ENCODE measurements at regions of chr16 and their contacts with region 1.

Region 1: DNA sequence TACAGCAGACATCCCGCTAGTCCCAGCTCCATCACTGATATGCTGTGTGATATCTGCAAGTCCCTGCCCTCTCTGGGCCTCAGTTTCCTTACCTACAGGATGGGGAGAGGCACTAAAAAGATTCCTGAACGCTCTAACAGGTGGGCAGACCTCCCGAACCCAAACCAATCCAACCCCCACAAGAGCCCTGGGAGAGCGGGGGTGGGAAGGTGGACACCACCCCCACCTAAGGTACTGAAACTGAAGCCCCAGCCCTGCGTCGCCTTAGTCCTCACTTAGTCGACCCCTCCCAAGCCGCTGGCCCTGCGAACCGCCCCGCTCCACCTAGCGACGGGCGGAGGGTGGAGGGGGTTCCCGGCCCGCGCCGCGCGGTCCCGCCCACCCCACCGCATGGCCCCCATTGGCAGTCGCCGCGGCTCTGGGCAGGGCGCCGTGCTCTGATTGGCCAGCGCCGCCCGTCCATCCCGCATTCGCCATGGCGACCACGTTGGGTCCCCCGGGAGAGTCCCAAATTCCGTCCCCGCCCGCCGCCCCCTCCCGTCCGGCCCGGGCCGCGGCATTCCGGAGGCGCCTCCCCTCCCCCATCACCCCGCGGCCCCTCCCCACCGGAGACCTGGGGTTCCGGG is 578 bp downstream of the CCDC102A start:
- DNase-seq: peak; percentile 79
- ATAC-seq: peak; percentile 96
- H3K4me3 ChIP-seq: peak overlapping the region; percentile 62 to 76
- H3K27ac ChIP-seq: peak overlapping the region; percentile 92; the same call in 1 of the 2 replicates
- H3K4me1 ChIP-seq: peaks cover 17 to 44% of the 10 kb centered on the region in 2 experiments
- H3K27me3 ChIP-seq: no peaks in the 10 kb centered on the region
- CTCF ChIP-seq: no peak
- POLR2A ChIP-seq: no peak
- RAD21 ChIP-seq: no peak

Region 2: DNA sequence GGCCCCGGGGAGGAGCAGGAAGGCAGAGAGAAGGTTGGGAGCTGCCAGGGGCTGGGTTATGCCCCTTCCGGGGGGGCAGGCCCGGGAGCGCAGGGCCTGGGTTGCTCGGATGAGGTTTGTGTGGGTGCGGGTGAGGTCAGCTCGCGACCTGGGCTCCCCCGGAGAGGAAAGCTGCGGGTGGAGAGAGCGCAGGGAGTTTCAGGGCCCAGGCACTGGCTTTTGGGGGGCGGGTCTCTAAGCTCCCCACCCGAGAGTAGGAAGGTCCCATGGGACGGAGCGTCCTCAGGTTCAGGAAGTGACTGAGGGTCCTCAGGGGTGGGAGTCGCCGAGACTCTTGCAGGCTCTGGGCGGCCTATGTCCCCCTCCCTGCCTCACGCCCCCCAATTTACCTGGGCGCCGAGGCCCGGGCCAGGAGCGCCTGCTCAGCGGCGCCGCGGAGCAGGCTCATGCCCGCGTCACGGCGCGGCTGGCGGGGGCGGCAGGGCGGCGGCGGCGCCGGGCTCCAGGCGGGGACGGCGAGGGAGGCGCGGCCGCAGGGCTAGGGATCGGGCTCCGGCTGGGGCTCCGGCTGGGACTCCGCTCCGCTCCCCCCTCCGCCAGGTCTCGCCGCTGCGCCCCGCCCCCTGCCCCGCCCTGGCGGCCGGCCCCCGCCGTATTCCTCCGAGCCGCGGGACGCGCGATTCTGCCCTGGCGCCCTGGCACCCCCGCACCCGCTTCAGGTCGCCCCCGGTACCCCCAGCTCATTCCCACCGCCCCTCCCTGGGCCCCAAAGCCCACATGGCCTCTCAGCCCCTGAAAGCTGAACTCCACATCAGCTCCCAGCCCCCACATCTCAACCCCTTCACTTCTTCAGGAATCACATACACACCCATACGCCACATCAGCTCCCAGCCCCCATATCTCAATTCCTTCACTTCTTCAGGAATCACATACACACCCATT is 49.6 kb before region 1 on chr16 and contains the start of gene DOK4:
- CTCF ChIA-PET with region 1: no interaction called
- POLR2A ChIA-PET with region 1: no interaction called
- RAD21 ChIA-PET with region 1: interaction called in 1 of 2 experiments, 3 read pairs
- intact Hi-C with region 1: loop called (anchors 5 kb)
- DNase-seq: no peak
- ATAC-seq: peak; percentile 97
- H3K4me3 ChIP-seq: peak within 1 kb of the TSS; percentile 72 to 77
- H3K27ac ChIP-seq: peak within 1 kb of the TSS; percentile 71; the same call in 1 of the 2 replicates
- H3K4me1 ChIP-seq: peaks cover 0 to 21% of the 10 kb centered on the region in 2 experiments
- H3K27me3 ChIP-seq: no peaks in the 10 kb centered on the region
- CTCF ChIP-seq: no peak
- POLR2A ChIP-seq: no peak
- RAD21 ChIP-seq: no peak
- total RNA-seq, gene DOK4: 14.4 TPM

Measured in HCT116 (cell line).